H1 (cell line): ENCODE measurements at regions of chr6 and their contacts with region 1.

Region 1: GRCh38 chr6:127266178-127266891 is at the start of gene RNF146:
- DNase-seq: peak; percentile 41 to 81
- H3K4me3 ChIP-seq: peak within 1 kb of the TSS; percentile 86 to 96 (median 90)
- H3K27ac ChIP-seq: peak within 1 kb of the TSS; percentile 91
- H3K4me1 ChIP-seq: peaks cover 0 to 5% (median 0%) of the 10 kb centered on the region in 4 experiments; a peak in 1 of 7 replicates
- H3K27me3 ChIP-seq: no peaks in the 10 kb centered on the region
- CTCF ChIP-seq: peak; percentile 28 to 59 (median 43)
- EP300 ChIP-seq: no peak
- POLR2A ChIP-seq: no peak; a peak in 1 of 3 replicates
- RAD21 ChIP-seq: peak; percentile 42 to 47
- total RNA-seq, gene RNF146: 28.8 and 30.8 TPM in 2 replicates

Region 2: GRCh38 chr6:127186889-127187288 is 79.4 kb before region 1 on chr6:
- CTCF ChIA-PET with region 1: interaction called, 23 read pairs
- POLR2A ChIA-PET with region 1: no interaction called
- DNase-seq: peak in 1 of 2 experiments; percentile 89
- H3K4me3 ChIP-seq: no peak overlapping the region
- H3K27ac ChIP-seq: no peak overlapping the region
- H3K4me1 ChIP-seq: no peaks in the 10 kb centered on the region
- H3K27me3 ChIP-seq: no peaks in the 10 kb centered on the region
- CTCF ChIP-seq: peak; percentile 63 to 82 (median 72)
- EP300 ChIP-seq: no peak
- POLR2A ChIP-seq: no peak
- RAD21 ChIP-seq: peak; percentile 52 to 59

Region 3: DNA sequence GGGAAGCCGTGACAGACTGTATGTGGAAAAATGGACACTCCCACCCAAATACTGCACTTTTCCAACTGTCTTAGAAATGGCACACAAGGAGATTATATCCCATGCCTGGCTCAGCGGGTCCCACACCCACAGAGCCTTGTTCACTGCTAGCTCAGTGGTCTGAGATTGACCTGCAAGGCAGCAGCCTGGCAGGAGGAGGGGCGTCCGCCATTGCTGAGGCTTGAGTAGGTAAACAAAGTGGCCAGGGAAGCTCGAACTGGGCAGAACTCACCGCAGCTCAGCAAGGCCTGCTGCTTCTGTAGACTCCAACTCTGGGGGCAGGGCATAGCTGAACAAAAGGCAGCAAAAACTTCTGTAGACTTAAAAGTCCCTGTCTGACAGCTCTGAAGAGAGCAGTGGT is 11.0 kb before region 1 on chr6:
- CTCF ChIA-PET with region 1: interaction called, 17 read pairs
- POLR2A ChIA-PET with region 1: no interaction called
- DNase-seq: no peak
- H3K4me3 ChIP-seq: no peak overlapping the region
- H3K27ac ChIP-seq: no peak overlapping the region
- H3K4me1 ChIP-seq: no peaks in the 10 kb centered on the region
- H3K27me3 ChIP-seq: no peaks in the 10 kb centered on the region
- CTCF ChIP-seq: no peak
- EP300 ChIP-seq: no peak
- POLR2A ChIP-seq: no peak
- RAD21 ChIP-seq: no peak

Region 4: DNA sequence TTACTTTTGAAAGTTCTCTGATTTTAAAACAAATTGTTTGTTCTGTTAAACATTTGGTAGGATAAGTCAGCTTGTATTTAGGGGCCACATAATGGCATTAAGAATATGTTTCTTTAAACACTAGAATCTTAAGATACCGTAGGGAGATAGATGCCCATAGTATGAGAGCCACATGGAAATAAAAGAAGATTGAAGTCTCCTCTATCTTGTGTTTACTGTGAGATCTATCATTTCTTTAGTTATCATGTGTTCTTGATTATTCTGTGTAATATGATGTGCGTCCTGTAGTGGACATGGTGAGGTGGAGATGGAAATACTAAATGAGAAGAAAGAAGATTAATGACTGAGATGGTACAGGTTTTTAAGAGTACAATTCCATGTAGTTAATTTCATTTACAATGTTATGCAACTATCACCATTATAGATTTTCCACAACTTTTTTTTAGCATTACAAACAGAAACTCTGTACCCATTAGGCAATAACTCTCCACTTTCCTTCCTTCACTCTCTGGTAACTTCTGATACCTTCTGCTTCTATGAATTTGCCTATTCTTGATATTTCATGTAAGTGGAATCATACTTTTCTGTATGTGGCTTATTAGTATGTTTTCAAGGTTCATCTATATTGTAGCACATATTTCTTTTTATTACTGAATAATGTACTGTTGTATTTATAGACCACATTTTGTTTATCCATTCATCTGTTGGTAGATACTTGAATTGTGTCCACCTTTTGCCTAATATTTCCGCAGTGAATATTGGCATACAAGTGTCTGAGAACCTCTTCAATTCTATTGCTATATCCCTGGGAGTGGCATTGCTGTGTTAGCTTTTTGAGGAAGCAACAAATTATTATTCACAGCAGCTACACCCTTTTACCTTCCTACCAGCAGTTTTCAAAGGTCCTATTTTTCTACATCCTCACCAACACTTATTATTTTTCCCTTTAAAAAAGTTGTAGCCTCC is 11.8 kb after region 1 on chr6:
- CTCF ChIA-PET with region 1: interaction called, 5 read pairs
- POLR2A ChIA-PET with region 1: interaction called, 16 read pairs
- DNase-seq: no peak
- H3K4me3 ChIP-seq: no peak overlapping the region
- H3K27ac ChIP-seq: no peak overlapping the region
- H3K4me1 ChIP-seq: no peaks in the 10 kb centered on the region
- H3K27me3 ChIP-seq: no peaks in the 10 kb centered on the region
- CTCF ChIP-seq: no peak
- EP300 ChIP-seq: no peak
- POLR2A ChIP-seq: no peak
- RAD21 ChIP-seq: no peak

Region 5: DNA sequence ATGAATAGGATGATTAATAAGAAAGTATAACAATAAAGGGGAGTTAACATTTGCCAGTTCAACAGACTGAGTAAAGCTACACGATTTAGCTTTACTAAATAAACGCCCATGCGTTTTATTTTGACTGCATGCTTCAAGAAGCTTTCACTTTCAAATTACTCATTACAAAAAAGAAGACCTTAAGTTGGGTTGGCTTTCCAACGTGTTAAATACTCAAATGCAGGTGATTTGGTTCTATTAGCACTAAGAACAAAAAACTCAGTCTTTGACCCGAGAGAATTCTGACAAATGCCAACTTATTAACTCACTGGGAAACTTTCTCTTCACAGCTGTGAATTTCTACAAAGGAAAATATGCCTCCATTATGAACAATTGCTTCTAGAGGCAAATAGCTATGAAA is 25.2 kb after region 1 on chr6:
- CTCF ChIA-PET with region 1: interaction called, 10 read pairs
- POLR2A ChIA-PET with region 1: interaction called, 12 read pairs
- DNase-seq: no peak
- H3K4me3 ChIP-seq: no peak overlapping the region; a peak in 1 of 8 replicates
- H3K27ac ChIP-seq: no peak overlapping the region
- H3K4me1 ChIP-seq: peaks cover 0 to 5% (median 0%) of the 10 kb centered on the region in 4 experiments; a peak in 3 of 7 replicates
- H3K27me3 ChIP-seq: no peaks in the 10 kb centered on the region
- CTCF ChIP-seq: no peak
- EP300 ChIP-seq: no peak
- POLR2A ChIP-seq: no peak
- RAD21 ChIP-seq: no peak